ENCODE measurements at regions of chr14 and their contacts with region 1.

Region 1: DNA sequence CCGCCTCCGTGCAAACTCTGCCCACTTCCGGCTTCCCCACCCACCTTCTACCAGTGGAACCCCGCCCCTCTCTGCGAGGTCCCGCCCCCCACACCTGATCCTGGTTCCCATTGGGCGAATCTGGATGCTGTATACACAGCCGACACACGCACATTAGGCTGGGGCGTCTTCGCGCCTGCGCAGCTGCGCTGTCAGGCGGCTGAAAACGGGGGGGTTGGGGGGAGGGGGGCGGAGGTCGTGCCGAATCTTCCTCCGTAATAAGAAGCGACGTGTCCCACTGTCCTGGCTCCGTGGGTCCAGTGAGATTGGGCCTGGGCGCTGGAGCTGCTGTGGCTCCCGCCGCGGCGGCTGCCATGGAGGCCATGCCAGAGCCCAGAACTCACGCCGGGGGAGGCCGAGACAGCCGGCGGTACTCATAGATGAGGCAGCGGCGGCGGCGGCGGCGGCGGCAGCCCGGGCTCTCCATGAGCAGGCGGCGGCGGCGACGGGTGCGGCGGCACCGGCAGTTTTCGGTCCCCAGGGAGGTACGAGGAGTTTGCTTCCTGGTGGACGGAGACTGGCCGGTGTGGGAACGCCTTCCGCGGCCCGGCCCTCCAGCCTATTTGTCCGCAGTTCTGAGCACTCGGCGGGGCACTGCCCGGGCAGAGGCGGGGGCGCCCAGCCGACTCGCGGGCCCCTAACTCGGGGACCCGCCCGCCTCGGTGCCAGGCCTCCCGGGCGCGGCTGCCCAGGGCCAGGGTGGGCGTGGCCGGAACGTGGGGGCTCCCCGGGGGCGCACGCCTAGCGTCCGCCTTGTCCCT is 64.5 kb downstream of the KLHL28 start:
- DNase-seq: peak; percentile 99

Region 2: GRCh38 chr14:44951051-44951450 is 53.8 kb after region 1 on chr14:
- intact Hi-C with region 1: no loop called
- DNase-seq: no peak

Region 3: DNA sequence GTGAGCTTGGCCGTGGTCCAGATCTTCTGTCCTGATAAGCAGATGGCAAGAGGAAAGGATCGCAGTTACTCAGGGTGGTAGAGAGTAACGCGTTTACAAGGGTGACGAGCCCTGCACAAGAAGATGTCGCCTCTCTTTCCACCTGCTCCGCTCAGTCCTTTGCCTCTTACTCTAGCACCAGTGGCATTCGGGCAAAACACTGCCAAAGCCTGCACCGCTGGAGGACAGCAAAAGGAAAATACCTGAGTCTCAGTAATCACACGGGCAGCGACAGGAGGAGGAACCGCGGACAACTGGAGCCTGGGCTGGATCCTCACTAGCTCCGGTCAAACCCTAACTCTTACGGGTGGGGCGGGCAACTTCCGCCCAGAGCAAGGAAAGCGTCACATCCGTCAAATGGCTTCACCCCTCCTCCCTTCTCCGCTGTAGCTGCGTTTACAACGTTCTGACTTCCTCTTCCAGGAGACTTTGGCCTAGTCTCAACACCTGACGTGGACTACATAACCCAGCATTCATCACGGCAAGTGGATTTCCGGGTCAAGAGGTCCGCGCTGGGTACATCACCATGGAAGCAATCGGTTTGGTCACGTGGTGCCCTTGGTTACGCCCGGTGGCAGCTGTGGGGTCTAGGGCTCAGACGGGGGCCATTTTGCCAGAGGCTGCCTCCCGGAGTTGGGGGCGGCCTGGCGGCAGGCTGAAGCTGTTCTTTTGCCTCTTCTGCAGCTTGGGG is 64.5 kb after region 1 on chr14 and contains the starts of genes KLHL28 and TOGARAM1:
- intact Hi-C with region 1: loop called (anchors 5 kb)
- DNase-seq: peak; percentile 98
- total RNA-seq, gene KLHL28: 11.2 TPM
- total RNA-seq, gene TOGARAM1: 16.3 TPM

Region 4: GRCh38 chr14:45242706-45243105 is 345.5 kb after region 1 on chr14:
- intact Hi-C with region 1: no loop called
- DNase-seq: no peak

Region 5: DNA sequence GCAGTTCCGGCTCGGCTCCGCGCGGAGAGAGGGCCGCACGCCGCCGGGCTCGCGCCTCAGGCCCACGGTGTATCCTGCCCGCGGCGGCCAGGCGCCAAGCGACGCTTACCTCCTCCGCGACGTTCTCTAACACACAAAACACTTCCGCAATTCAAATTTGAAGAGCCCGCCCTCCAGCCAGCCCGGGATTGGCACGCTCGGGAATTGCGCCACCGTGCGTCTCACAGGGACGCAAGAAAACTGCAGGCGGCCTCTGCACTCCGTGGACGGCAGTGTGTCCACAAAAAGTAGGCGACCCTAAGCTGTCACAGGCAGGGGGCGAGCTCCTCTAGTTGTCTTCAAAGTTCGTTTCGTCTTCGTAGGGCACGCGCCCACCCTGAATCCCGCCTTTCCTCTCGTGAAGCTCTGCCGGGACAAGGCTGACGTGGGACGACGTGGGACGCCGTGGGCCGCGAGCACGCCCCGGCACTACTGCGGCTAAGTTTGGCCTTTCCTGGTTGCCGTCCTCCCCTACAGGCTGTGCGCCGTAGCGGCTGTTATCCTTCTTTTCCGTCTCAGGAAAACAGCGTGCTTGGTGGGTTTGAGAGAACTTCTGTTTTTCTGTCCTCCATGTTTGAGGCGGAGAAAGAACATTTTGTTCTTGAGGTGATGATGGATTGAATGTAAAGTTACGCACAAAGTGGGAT is 356.0 kb after region 1 on chr14 and contains the start of gene MIS18BP1:
- intact Hi-C with region 1: loop called (anchors 5 kb)
- DNase-seq: peak; percentile 97
- total RNA-seq, gene MIS18BP1: 9.7 TPM